Heart right ventricle (tissue), 16 donors: ENCODE measurements at regions of chr4 and their contacts with region 1.

Region 1: DNA sequence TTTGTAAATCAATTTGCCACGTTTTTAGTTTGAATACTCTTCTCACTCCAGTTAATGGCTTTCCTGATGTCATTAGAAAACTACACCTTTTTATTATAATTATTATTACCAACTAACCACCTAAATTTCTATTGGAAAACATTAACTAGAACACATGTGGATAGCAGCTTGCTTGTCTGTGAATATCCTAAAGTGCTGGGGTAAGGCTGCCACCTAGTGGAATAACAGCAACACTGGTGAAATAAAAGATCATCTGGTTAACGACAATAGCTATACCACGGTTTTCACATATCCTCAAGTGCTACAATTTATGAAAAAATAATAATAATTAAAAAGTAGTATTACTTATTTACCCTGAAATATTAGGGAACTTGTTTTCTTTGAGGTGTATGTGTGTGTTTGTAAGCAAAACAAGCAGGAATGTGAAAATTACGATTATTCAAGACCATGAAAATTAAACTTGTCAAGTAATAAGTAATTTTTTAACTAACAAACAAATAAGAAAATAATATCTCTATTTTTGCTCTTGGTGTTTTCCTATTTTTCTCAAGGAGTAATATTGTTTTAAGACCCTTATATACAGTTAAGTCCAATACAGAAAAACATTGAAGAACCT is 130.1 kb upstream of the TECRL start:
- DNase-seq: peak in 1 of 2 donors; percentile 48
- ATAC-seq: peak; percentile 57 to 88 (median 80)
- H3K4me3 ChIP-seq: no peak overlapping the region
- H3K27ac ChIP-seq: no peak overlapping the region
- H3K4me1 ChIP-seq: no peaks in the 10 kb centered on the region
- H3K27me3 ChIP-seq: no peaks in the 10 kb centered on the region
- CTCF ChIP-seq: peak; percentile 53 to 83 (median 77)

Region 2: DNA sequence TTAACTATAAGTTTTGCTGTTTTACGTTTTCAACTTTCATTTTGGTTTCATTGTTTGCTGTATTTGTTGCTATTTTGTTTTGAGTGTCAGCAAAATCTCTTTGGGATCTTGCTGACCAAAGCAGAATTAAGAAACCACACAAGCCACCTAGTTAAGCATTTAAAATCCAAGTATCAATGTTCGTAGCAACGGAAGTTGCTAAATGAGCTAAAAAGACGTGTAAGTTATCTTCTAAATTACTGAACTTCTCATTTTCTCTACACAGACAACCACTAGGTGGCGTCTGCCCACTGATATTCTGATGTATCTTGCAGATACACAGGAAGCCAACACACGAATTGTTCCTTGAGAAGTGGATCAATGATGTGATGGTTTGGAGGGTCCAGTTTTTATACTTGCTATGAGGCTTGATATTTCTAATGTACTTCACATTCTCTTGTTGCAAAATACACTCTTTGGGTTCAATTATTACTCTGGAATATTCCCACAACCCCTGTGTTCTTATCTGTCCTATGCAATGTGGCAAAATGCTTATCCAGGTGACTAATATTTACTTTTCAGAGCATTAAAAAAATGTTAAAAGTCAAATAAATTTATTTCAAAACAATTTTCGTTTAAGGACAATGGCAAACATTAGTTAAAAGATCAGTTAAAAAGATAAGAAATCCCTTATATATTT is 380.6 kb before region 1 on chr4:
- intact Hi-C with region 1: loop called in 8 of 10 experiments (anchors 2 to 10 kb)
- DNase-seq: peak in 1 of 2 donors; percentile 30
- ATAC-seq: no peak
- H3K4me3 ChIP-seq: peak overlapping the region in 5 of 10 donors; percentile 26 to 39 (median 29)
- H3K27ac ChIP-seq: no peak overlapping the region
- H3K4me1 ChIP-seq: no peaks in the 10 kb centered on the region
- H3K27me3 ChIP-seq: no peaks in the 10 kb centered on the region
- CTCF ChIP-seq: peak; percentile 31 to 85 (median 75)

Region 3: GRCh38 chr4:64271601-64272081 is 267.7 kb before region 1 on chr4:
- intact Hi-C with region 1: loop called in 1 of 10 experiments (anchors 10 kb)
- DNase-seq: peak; percentile 18 to 55
- ATAC-seq: peak; percentile 73 to 92 (median 86)
- H3K4me3 ChIP-seq: peak overlapping the region in 7 of 10 donors; percentile 10 to 42 (median 33)
- H3K27ac ChIP-seq: peak overlapping the region in 7 of 10 donors; percentile 29 to 52 (median 45)
- H3K4me1 ChIP-seq: peaks cover 0 to 24% (median 0%) of the 10 kb centered on the region in 9 donors
- H3K27me3 ChIP-seq: no peaks in the 10 kb centered on the region
- CTCF ChIP-seq: peak in 5 of 9 donors; percentile 11 to 35 (median 22)

Region 4: DNA sequence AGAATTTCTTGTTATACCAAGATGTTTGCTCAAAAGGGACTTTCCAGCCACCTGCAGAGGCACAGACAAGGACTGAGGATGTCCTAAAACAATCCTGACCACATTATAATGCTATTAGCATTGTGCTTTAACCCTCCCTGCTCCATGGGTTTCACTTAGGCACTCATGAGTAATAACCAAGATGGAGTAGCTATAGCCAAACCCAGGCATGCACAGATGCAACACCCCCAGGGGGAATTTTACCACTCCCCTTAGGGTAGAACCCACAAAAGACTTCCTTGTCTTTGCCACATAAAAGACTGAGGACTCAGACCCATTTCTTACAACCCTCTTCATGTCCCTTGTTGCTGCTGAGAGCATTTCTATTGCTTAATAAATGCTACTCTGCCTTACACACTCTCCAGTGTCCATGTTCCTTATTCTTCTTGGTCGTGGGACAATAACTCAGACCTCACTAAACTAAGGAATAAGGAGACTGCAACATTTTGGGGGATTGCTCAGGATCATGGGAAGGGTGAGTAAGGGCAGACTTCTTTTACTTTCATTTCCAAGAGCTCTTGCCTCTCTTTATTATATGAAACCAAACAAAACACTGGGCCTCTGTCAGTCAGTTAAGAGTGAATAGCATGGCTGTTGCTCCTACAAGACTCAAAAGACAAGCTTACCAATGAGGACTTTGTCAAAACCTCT is 233.6 kb before region 1 on chr4:
- intact Hi-C with region 1: loop called in 2 of 10 experiments (anchors 10 kb)
- DNase-seq: no peak
- ATAC-seq: peak in 4 of 8 donors; percentile 9 to 66 (median 15)
- H3K4me3 ChIP-seq: no peak overlapping the region
- H3K27ac ChIP-seq: no peak overlapping the region
- H3K4me1 ChIP-seq: no peaks in the 10 kb centered on the region
- H3K27me3 ChIP-seq: no peaks in the 10 kb centered on the region
- CTCF ChIP-seq: no peak

Region 5: GRCh38 chr4:64353904-64354303 is 185.4 kb before region 1 on chr4:
- intact Hi-C with region 1: loop called in 1 of 10 experiments (anchors 10 kb)
- DNase-seq: no peak
- ATAC-seq: peak in 6 of 8 donors; percentile 24 to 74 (median 69)
- H3K4me3 ChIP-seq: no peak overlapping the region
- H3K27ac ChIP-seq: peak overlapping the region in 8 of 10 donors; percentile 18 to 76 (median 65)
- H3K4me1 ChIP-seq: peaks cover 0 to 8% (median 0%) of the 10 kb centered on the region in 9 donors
- H3K27me3 ChIP-seq: no peaks in the 10 kb centered on the region
- CTCF ChIP-seq: no peak

Region 6: GRCh38 chr4:64407000-64407399 is 132.3 kb before region 1 on chr4:
- intact Hi-C with region 1: loop called in 5 of 10 experiments (anchors 5 to 10 kb)
- DNase-seq: no peak
- ATAC-seq: no peak
- H3K4me3 ChIP-seq: peak overlapping the region; percentile 3 to 53 (median 48)
- H3K27ac ChIP-seq: peak overlapping the region in 9 of 10 donors; percentile 26 to 79 (median 76)
- H3K4me1 ChIP-seq: no peaks in the 10 kb centered on the region
- H3K27me3 ChIP-seq: no peaks in the 10 kb centered on the region
- CTCF ChIP-seq: no peak

Region 7: GRCh38 chr4:64417974-64418373 is 121.4 kb before region 1 on chr4:
- intact Hi-C with region 1: loop called in 4 of 10 experiments (anchors 5 to 10 kb)
- DNase-seq: peak in 1 of 2 donors; percentile 54
- ATAC-seq: peak; percentile 84 to 98 (median 94)
- H3K4me3 ChIP-seq: peak overlapping the region in 1 of 10 donors; percentile 0
- H3K27ac ChIP-seq: peak overlapping the region; percentile 20 to 82 (median 66)
- H3K4me1 ChIP-seq: peaks cover 0 to 4% (median 0%) of the 10 kb centered on the region in 9 donors
- H3K27me3 ChIP-seq: no peaks in the 10 kb centered on the region
- CTCF ChIP-seq: no peak